ENCODE measurements at regions of chr3 and their contacts with region 1.

Region 1: GRCh38 chr3:124761250-124761796 is 31.1 kb downstream of the UMPS start:
- DNase-seq: peak; percentile 87
- ATAC-seq: peak; percentile 86
- H3K4me3 Mint-ChIP-seq: no peak overlapping the region
- H3K27ac Mint-ChIP-seq: no peak overlapping the region
- H3K4me1 Mint-ChIP-seq: peaks cover 2% of the 10 kb centered on the region
- H3K27me3 Mint-ChIP-seq: no peaks in the 10 kb centered on the region
- CTCF ChIP-seq: peak; percentile 96

Region 2: DNA sequence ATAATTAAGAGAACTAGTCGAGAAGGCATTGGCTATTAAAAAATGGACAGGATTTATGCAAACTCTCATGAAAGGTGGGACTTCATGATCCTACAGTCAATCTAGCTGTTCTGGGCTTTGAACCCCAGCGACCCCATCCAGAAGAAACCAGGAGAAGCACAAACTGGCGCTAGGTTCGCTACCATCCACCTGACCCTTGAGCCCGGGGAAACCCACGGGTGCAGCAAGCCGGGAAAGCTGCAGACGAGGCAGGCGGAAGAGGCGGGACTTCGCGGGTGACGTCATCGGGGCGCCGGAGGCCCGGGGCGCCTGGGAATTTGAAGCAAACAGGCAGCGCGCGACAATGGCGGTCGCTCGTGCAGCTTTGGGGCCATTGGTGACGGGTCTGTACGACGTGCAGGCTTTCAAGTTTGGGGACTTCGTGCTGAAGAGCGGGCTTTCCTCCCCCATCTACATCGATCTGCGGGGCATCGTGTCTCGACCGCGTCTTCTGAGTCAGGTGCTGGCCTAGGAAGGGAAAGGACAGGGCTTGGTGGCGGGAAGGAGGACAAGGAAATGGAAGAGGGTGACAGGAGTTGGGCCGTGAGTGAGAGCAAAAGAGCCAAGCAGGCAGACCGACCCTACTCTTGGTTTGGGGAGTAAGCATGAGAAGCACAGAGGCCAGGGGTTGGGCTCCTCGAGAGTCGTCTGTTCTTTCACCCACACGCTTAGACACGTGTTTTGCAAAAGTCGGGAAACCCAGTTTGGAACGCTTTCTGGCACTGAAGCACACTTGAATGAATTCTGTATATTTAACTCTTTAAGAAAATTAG is 31.0 kb before region 1 on chr3 and contains the start of gene UMPS:
- CTCF ChIA-PET with region 1: interaction called, 13 read pairs
- POLR2A ChIA-PET with region 1: no interaction called
- intact Hi-C with region 1: no loop called
- DNase-seq: peak; percentile 95
- ATAC-seq: peak; percentile 98
- H3K4me3 Mint-ChIP-seq: peak within 1 kb of the TSS; percentile 94
- H3K27ac Mint-ChIP-seq: peak within 1 kb of the TSS; percentile 98
- H3K4me1 Mint-ChIP-seq: peaks cover 29% of the 10 kb centered on the region
- H3K27me3 Mint-ChIP-seq: peaks cover 3% of the 10 kb centered on the region
- CTCF ChIP-seq: no peak
- total RNA-seq, gene UMPS: 41.7 to 53.1 TPM

Region 3: DNA sequence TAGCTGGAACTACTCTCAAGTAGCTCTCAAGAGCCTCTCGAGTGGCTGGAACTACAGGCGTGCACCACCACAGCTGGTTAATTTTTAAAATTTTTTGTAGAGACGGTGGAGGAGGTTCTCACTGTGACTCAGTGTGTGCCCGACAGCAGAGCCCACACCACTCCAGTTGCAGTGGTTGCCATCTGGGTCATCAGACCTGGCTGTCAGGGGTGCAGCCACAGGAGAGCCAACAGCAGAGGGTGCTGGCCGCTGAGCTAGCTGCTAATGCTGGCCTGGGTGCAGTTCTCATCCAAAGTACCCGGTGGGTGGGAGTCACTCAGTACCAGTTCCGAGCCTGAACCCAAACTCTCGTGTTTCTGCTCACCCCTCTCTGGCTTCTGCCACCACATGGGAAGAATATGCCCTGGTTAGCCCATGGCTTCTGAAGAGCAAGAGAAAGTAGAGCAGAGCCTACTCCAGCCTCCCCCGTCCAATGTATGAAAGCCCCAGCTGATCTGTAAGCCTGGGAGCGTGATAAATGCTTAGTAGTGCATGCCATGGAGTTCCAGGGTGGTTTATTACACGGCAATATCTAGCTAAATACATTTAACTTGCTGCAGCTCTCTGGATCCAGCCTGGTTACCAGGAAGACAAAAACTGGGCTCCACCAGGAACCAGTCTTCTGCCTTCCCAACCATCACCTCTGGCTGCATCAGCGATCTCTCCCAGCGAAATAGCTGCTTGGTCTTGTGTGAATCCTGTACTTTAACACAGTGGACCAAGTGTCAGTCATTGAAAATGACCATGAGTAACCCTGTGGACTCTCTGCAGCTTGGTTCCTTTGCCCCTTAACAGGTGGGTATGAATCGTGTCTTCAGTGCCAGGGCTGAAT is 14.0 kb before region 1 on chr3:
- CTCF ChIA-PET with region 1: interaction called, 12 read pairs
- POLR2A ChIA-PET with region 1: interaction called, 4 read pairs
- intact Hi-C with region 1: no loop called
- DNase-seq: no peak
- ATAC-seq: no peak
- H3K4me3 Mint-ChIP-seq: no peak overlapping the region
- H3K27ac Mint-ChIP-seq: no peak overlapping the region
- H3K4me1 Mint-ChIP-seq: no peaks in the 10 kb centered on the region
- H3K27me3 Mint-ChIP-seq: no peaks in the 10 kb centered on the region
- CTCF ChIP-seq: no peak

Region 4: GRCh38 chr3:124890282-124891190 is 129.2 kb after region 1 on chr3:
- CTCF ChIA-PET with region 1: interaction called, 56 read pairs
- POLR2A ChIA-PET with region 1: no interaction called
- intact Hi-C with region 1: no loop called
- DNase-seq: no peak
- ATAC-seq: no peak
- H3K4me3 Mint-ChIP-seq: no peak overlapping the region
- H3K27ac Mint-ChIP-seq: no peak overlapping the region
- H3K4me1 Mint-ChIP-seq: peaks cover 7% of the 10 kb centered on the region
- H3K27me3 Mint-ChIP-seq: peaks cover 31% of the 10 kb centered on the region
- CTCF ChIP-seq: no peak

Region 5: GRCh38 chr3:124905849-124906248 is 144.5 kb after region 1 on chr3:
- CTCF ChIA-PET with region 1: interaction called, 231 read pairs
- POLR2A ChIA-PET with region 1: interaction called, 4 read pairs
- intact Hi-C with region 1: loop called (anchors 2 kb)
- DNase-seq: no peak
- ATAC-seq: no peak
- H3K4me3 Mint-ChIP-seq: no peak overlapping the region
- H3K27ac Mint-ChIP-seq: no peak overlapping the region
- H3K4me1 Mint-ChIP-seq: peaks cover under 1% of the 10 kb centered on the region
- H3K27me3 Mint-ChIP-seq: peaks cover 5% of the 10 kb centered on the region
- CTCF ChIP-seq: no peak